Vagina (tissue), 2 donors: ENCODE measurements at regions of chr6 and their contacts with region 1.

Region 1: DNA sequence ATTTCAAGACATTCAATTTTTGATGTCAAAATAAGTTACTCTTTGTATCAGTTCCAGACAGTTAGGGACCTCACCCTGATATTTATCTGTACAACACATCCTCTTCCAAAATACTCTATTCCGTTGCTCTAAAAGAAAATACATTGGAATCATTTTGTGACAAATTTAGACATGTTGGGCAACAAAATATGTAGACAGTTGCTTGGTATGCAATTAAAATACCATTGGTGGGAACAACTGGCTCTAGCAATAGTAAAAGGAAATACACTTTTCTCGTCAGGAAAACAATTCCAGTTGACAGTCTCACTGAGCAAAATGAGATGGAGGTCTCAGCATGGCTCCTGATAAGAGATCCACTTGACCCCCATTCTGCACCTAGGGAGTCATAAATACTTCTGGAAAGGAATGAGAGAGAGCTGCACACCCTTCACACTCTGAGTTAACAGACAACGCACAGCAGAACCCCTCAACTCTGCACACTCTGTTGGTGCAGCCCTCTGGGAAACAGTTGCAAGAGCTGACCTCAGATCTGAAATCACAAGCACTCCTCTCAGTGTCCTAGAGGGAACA is 171.3 kb upstream of the NT5E start:
- DNase-seq: no peak
- H3K4me3 ChIP-seq: no peak overlapping the region
- H3K27ac ChIP-seq: no peak overlapping the region
- H3K4me1 ChIP-seq: no peaks in the 10 kb centered on the region
- H3K27me3 ChIP-seq: no peaks in the 10 kb centered on the region
- CTCF ChIP-seq: no peak
- POLR2A ChIP-seq: no peak

Region 2: GRCh38 chr6:85236636-85237035 is 41.9 kb before region 1 on chr6:
- intact Hi-C with region 1: no loop called
- DNase-seq: no peak
- H3K4me3 ChIP-seq: no peak overlapping the region
- H3K27ac ChIP-seq: no peak overlapping the region
- H3K4me1 ChIP-seq: no peaks in the 10 kb centered on the region
- H3K27me3 ChIP-seq: no peaks in the 10 kb centered on the region
- CTCF ChIP-seq: no peak
- POLR2A ChIP-seq: no peak

Region 3: GRCh38 chr6:87066449-87067333 is 1788.1 kb after region 1 on chr6:
- intact Hi-C with region 1: loop called (anchors 5 kb)
- DNase-seq: no peak
- H3K4me3 ChIP-seq: no peak overlapping the region
- H3K27ac ChIP-seq: no peak overlapping the region
- H3K4me1 ChIP-seq: no peaks in the 10 kb centered on the region
- H3K27me3 ChIP-seq: no peaks in the 10 kb centered on the region
- CTCF ChIP-seq: peak in 1 of 3 experiments; percentile 10
- POLR2A ChIP-seq: no peak